ENCODE measurements at regions of chr19 and their contacts with region 1.

Region 1: DNA sequence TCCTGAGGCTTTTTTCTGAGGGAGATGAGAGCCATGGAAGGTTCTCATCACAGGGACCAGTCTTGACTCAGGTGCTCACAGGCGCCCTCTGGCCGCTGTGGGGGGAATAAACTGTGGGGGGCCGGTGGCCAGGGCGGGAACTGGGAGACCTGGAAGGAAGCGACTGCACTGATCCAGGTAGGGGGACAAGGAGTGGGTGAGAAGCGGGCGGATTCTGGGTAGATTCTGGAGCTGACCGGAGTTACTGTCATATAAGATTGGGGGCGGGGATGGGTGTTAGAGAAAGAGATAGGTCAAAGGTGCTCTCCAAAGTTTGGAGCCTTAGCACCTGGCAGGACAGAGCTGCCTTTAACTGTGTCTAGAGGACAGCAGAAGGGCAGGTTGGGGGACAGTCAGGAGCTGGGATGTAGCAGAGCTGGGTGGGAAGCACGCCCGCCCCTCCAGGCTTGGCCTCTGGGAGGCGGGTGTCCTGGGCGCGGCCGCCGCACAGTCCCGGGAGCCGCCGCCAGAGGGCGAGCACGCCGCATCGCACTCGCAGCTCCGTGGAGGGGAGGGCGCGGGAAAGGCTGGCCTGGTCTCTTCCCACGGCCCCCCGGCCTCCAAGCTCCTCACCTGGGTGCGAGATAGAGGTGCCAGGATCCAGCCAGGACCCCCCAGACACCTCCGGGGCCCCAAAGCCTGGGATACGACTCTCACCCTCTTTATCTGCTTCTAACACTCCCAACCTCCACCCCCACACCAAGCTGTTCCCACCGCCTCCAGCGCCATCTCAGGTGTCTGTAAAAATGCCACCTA is 4.2 kb upstream of the DAND5 start:
- DNase-seq: peak; percentile 65 to 74 (median 72)
- H3K4me3 ChIP-seq: peak overlapping the region; percentile 8 to 79 (median 28)
- H3K4me3 Mint-ChIP-seq: peak overlapping the region; percentile 83 to 89
- H3K27ac ChIP-seq: peak overlapping the region in 1 of 2 donors; percentile 16
- H3K27ac Mint-ChIP-seq: peak overlapping the region in 4 of 7 donors; percentile 53 to 93 (median 68)
- H3K4me1 ChIP-seq: peaks cover 7 to 10% of the 10 kb centered on the region in 2 donors
- H3K4me1 Mint-ChIP-seq: peaks cover 6% of the 10 kb centered on the region
- H3K27me3 ChIP-seq: no peaks in the 10 kb centered on the region
- H3K27me3 Mint-ChIP-seq: peaks cover 1 to 6% (median 5%) of the 10 kb centered on the region in 3 donors
- CTCF ChIP-seq: peak; percentile 99

Region 2: GRCh38 chr19:12881172-12881808 is 83.9 kb before region 1 on chr19 and contains the start of gene DNASE2:
- intact Hi-C with region 1: loop called in 1 of 2 experiments (anchors 10 kb)
- DNase-seq: peak; percentile 96 to 98 (median 97)
- H3K4me3 ChIP-seq: peak within 1 kb of the TSS; percentile 57 to 80 (median 78)
- H3K4me3 Mint-ChIP-seq: peak within 1 kb of the TSS; percentile 86 to 92
- H3K27ac ChIP-seq: peak within 1 kb of the TSS; percentile 90 to 94
- H3K27ac Mint-ChIP-seq: peak within 1 kb of the TSS; percentile 97 to 98 (median 97)
- H3K4me1 ChIP-seq: peaks cover 59 to 68% of the 10 kb centered on the region in 2 donors
- H3K4me1 Mint-ChIP-seq: peaks cover 52% of the 10 kb centered on the region
- H3K27me3 ChIP-seq: peaks cover 0 to 4% of the 10 kb centered on the region in 2 donors
- H3K27me3 Mint-ChIP-seq: peaks cover 4 to 20% (median 11%) of the 10 kb centered on the region in 3 donors
- CTCF ChIP-seq: no peak
- polyA plus RNA-seq, gene DNASE2: 38.8 to 91.6 (median 44.8) TPM

Region 3: DNA sequence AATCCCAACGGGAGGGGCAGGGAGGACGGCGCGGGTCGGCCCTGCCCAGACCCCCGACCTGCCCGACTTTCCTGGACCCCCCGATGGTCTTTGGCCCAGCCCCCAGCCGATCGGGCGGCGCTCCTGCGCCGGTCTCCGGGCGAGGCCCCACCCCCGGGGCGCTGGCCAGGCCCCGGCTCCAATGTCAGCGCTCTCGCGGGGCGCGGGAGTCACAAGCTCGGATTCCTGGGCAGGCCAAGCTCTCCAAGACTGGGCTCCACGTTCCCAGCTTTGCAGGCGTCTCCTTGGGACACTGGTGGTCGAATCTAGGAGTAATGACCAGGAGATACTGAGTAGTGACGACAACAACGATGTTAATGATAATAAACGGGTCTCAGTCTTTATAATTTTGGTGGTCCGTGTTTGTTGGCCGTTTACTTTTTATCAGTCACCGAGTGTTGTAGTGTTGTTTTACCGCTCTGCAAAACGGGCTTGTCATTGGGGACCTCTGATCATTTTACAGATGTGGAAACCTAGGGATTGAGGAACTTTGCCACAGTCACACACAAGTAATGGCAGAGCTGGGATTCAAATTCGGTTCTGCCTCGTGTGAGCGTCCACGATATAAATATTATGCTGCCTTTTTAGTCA is 19.0 kb before region 1 on chr19:
- intact Hi-C with region 1: no loop called
- DNase-seq: peak; percentile 56 to 70 (median 60)
- H3K4me3 ChIP-seq: peak overlapping the region; percentile 50 to 95 (median 77)
- H3K4me3 Mint-ChIP-seq: peak overlapping the region; percentile 86 to 91
- H3K27ac ChIP-seq: peak overlapping the region; percentile 78 to 93
- H3K27ac Mint-ChIP-seq: peak overlapping the region; percentile 89 to 95 (median 93)
- H3K4me1 ChIP-seq: peaks cover 26 to 56% of the 10 kb centered on the region in 2 donors
- H3K4me1 Mint-ChIP-seq: peaks cover 41% of the 10 kb centered on the region
- H3K27me3 ChIP-seq: no peaks in the 10 kb centered on the region
- H3K27me3 Mint-ChIP-seq: no peaks in the 10 kb centered on the region
- CTCF ChIP-seq: no peak

Region 4: GRCh38 chr19:13417054-13417453 is 451.8 kb after region 1 on chr19:
- intact Hi-C with region 1: no loop called
- DNase-seq: no peak
- H3K4me3 ChIP-seq: no peak overlapping the region
- H3K4me3 Mint-ChIP-seq: no peak overlapping the region
- H3K27ac ChIP-seq: no peak overlapping the region
- H3K27ac Mint-ChIP-seq: no peak overlapping the region
- H3K4me1 ChIP-seq: no peaks in the 10 kb centered on the region
- H3K4me1 Mint-ChIP-seq: no peaks in the 10 kb centered on the region
- H3K27me3 ChIP-seq: no peaks in the 10 kb centered on the region
- H3K27me3 Mint-ChIP-seq: peaks cover 0 to 12% (median 10%) of the 10 kb centered on the region in 3 donors
- CTCF ChIP-seq: no peak

Measured in CD14-positive monocyte (primary cell).